Endothelial cell of umbilical vein (primary cell): ENCODE measurements at regions of chr10 and their contacts with region 1.

Region 1: GRCh38 chr10:66931340-66931948 is 5.6 kb downstream of the LRRTM3 start:
- DNase-seq: peak; percentile 53
- H3K4me3 ChIP-seq: no peak overlapping the region
- H3K27ac ChIP-seq: no peak overlapping the region
- H3K4me1 ChIP-seq: no peaks in the 10 kb centered on the region
- H3K27me3 ChIP-seq: peaks cover 22 to 25% of the 10 kb centered on the region in 2 experiments
- CTCF ChIP-seq: peak; percentile 35 to 49
- POLR2A ChIP-seq: no peak

Region 2: GRCh38 chr10:64977915-64978314 is 1953.5 kb before region 1 on chr10:
- CTCF ChIA-PET with region 1: interaction called, 5 read pairs
- POLR2A ChIA-PET with region 1: no interaction called
- dilution Hi-C with region 1: no loop called
- intact Hi-C with region 1: loop called (anchors 5 kb)
- DNase-seq: peak; percentile 20
- H3K4me3 ChIP-seq: no peak overlapping the region
- H3K27ac ChIP-seq: no peak overlapping the region
- H3K4me1 ChIP-seq: no peaks in the 10 kb centered on the region
- H3K27me3 ChIP-seq: no peaks in the 10 kb centered on the region
- CTCF ChIP-seq: no peak
- POLR2A ChIP-seq: no peak

Region 3: GRCh38 chr10:66964946-66965345 is 33.5 kb after region 1 on chr10:
- CTCF ChIA-PET with region 1: no interaction called
- POLR2A ChIA-PET with region 1: no interaction called
- dilution Hi-C with region 1: no loop called
- intact Hi-C with region 1: no loop called
- DNase-seq: no peak
- H3K4me3 ChIP-seq: no peak overlapping the region
- H3K27ac ChIP-seq: no peak overlapping the region
- H3K4me1 ChIP-seq: no peaks in the 10 kb centered on the region
- H3K27me3 ChIP-seq: no peaks in the 10 kb centered on the region
- CTCF ChIP-seq: no peak
- POLR2A ChIP-seq: no peak

Region 4: GRCh38 chr10:67306588-67307205 is 375.3 kb after region 1 on chr10:
- CTCF ChIA-PET with region 1: interaction called, 11 read pairs
- POLR2A ChIA-PET with region 1: no interaction called
- dilution Hi-C with region 1: no loop called
- intact Hi-C with region 1: no loop called
- DNase-seq: peak; percentile 32
- H3K4me3 ChIP-seq: no peak overlapping the region
- H3K27ac ChIP-seq: no peak overlapping the region
- H3K4me1 ChIP-seq: no peaks in the 10 kb centered on the region
- H3K27me3 ChIP-seq: no peaks in the 10 kb centered on the region
- CTCF ChIP-seq: peak; percentile 43 to 47
- POLR2A ChIP-seq: no peak

Region 5: GRCh38 chr10:67520924-67521520 is 589.6 kb after region 1 on chr10:
- CTCF ChIA-PET with region 1: interaction called, 29 read pairs
- POLR2A ChIA-PET with region 1: no interaction called
- dilution Hi-C with region 1: no loop called
- intact Hi-C with region 1: loop called (anchors 2 kb)
- DNase-seq: peak; percentile 54
- H3K4me3 ChIP-seq: no peak overlapping the region
- H3K27ac ChIP-seq: no peak overlapping the region
- H3K4me1 ChIP-seq: no peaks in the 10 kb centered on the region
- H3K27me3 ChIP-seq: no peaks in the 10 kb centered on the region
- CTCF ChIP-seq: peak; percentile 63 to 65
- POLR2A ChIP-seq: no peak